CD14-positive monocyte (primary cell): ENCODE measurements at regions of chr3 and their contacts with region 1.

Region 1: DNA sequence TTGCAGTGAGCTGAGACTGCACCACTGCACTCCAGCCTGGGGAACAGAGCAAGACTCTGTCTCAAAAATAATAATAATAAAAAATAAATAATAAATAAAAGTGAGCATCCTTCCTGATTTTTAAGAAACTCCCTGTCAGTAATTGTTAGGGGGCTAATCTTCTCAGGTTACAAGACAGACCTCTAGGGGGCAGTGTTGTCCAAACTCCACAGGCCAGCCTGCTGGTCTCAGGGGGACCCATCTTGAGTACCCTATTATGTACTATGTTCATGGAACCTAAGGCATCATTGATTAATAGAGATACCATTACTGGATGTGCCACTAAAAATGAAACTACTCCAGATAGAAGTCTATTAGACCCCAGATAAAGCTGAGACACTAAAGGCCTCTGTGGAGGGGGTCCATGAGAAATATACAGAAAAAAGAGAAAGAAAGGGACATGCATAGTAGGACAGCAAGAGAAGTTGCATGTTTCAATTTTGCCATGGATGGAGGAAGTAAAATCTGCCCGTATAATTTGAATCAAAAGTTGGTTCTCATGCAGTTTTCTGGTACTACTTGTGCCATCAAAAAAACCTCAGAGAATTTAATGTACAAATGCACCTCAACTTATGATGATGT is 85.5 kb upstream of the CDV3 start:
- DNase-seq: peak; percentile 26 to 56 (median 56)
- H3K4me3 ChIP-seq: no peak overlapping the region
- H3K4me3 Mint-ChIP-seq: no peak overlapping the region
- H3K27ac ChIP-seq: no peak overlapping the region
- H3K27ac Mint-ChIP-seq: no peak overlapping the region
- H3K4me1 ChIP-seq: no peaks in the 10 kb centered on the region
- H3K4me1 Mint-ChIP-seq: no peaks in the 10 kb centered on the region
- H3K27me3 ChIP-seq: no peaks in the 10 kb centered on the region
- H3K27me3 Mint-ChIP-seq: peaks cover 0 to 5% (median 0%) of the 10 kb centered on the region in 3 donors
- CTCF ChIP-seq: peak; percentile 92

Region 2: GRCh38 chr3:133578548-133579191 is 90.6 kb after region 1 on chr3:
- intact Hi-C with region 1: loop called (anchors 5 kb)
- DNase-seq: peak in 1 of 3 donors; percentile 27
- H3K4me3 ChIP-seq: no peak overlapping the region
- H3K4me3 Mint-ChIP-seq: no peak overlapping the region
- H3K27ac ChIP-seq: peak overlapping the region in 1 of 2 donors; percentile 21
- H3K27ac Mint-ChIP-seq: peak overlapping the region in 3 of 7 donors; percentile 26 to 69 (median 68)
- H3K4me1 ChIP-seq: peaks cover 32 to 42% of the 10 kb centered on the region in 2 donors
- H3K4me1 Mint-ChIP-seq: peaks cover 37% of the 10 kb centered on the region
- H3K27me3 ChIP-seq: no peaks in the 10 kb centered on the region
- H3K27me3 Mint-ChIP-seq: peaks cover 0 to 1% (median 0%) of the 10 kb centered on the region in 3 donors
- CTCF ChIP-seq: peak; percentile 73